PC-9 (cell line): ENCODE measurements at regions of chr11 and their contacts with region 1.

Region 1: DNA sequence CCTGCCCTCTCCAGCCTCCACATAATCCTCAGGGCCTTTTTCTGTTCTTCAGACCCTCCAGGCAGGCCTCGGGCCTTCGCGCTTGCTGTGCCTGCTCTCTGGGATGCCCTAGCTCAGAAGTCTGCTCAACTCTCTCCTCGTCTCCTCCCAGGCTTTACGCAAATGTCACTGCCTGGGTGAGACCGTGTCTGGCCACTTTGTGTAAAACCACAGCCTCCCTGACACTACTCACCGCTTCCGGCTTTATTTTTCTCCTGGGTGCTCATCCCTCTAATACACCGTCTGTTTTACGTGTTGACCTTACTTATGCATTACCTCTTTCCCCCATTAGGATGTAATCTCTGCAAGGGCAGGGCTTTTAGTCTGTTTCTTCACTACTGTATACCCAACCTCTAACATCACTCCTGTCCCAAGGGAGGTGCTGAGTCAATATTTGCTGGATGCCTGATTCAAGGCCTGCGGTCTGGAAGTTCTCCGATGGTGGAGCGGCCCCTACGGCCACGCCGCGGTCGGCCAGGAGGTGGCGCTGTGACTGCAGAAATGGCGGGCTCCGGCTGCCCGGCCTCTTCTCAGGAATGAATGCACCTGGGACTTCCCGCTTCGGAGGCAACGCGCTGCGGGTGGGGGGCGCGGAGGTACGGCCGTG is 58.2 kb upstream of the THY1 start:
- DNase-seq: peak; percentile 86 to 90
- H3K4me3 ChIP-seq: no peak overlapping the region
- H3K27ac ChIP-seq: no peak overlapping the region
- H3K4me1 ChIP-seq: peaks cover 6% of the 10 kb centered on the region
- H3K27me3 ChIP-seq: 0 out of 2 replicates have a peak, but pooled peaks cover 7% of the 10 kb centered on the region
- CTCF ChIP-seq: peak; percentile 100

Region 2: GRCh38 chr11:119533921-119534736 is 53.0 kb after region 1 on chr11:
- CTCF ChIA-PET with region 1: no interaction called
- POLR2A ChIA-PET with region 1: no interaction called
- intact Hi-C with region 1: loop called (anchors 5 kb)
- DNase-seq: peak; percentile 49 to 74
- H3K4me3 ChIP-seq: no peak overlapping the region
- H3K27ac ChIP-seq: no peak overlapping the region
- H3K4me1 ChIP-seq: no peaks in the 10 kb centered on the region
- H3K27me3 ChIP-seq: peaks cover 34% of the 10 kb centered on the region
- CTCF ChIP-seq: peak; percentile 99

Region 3: GRCh38 chr11:119666463-119667131 is 185.5 kb after region 1 on chr11:
- CTCF ChIA-PET with region 1: no interaction called
- POLR2A ChIA-PET with region 1: no interaction called
- intact Hi-C with region 1: loop called (anchors 2 kb)
- DNase-seq: peak; percentile 71 to 83
- H3K4me3 ChIP-seq: no peak overlapping the region
- H3K27ac ChIP-seq: no peak overlapping the region
- H3K4me1 ChIP-seq: no peaks in the 10 kb centered on the region
- H3K27me3 ChIP-seq: no peaks in the 10 kb centered on the region
- CTCF ChIP-seq: peak; percentile 98

Region 4: DNA sequence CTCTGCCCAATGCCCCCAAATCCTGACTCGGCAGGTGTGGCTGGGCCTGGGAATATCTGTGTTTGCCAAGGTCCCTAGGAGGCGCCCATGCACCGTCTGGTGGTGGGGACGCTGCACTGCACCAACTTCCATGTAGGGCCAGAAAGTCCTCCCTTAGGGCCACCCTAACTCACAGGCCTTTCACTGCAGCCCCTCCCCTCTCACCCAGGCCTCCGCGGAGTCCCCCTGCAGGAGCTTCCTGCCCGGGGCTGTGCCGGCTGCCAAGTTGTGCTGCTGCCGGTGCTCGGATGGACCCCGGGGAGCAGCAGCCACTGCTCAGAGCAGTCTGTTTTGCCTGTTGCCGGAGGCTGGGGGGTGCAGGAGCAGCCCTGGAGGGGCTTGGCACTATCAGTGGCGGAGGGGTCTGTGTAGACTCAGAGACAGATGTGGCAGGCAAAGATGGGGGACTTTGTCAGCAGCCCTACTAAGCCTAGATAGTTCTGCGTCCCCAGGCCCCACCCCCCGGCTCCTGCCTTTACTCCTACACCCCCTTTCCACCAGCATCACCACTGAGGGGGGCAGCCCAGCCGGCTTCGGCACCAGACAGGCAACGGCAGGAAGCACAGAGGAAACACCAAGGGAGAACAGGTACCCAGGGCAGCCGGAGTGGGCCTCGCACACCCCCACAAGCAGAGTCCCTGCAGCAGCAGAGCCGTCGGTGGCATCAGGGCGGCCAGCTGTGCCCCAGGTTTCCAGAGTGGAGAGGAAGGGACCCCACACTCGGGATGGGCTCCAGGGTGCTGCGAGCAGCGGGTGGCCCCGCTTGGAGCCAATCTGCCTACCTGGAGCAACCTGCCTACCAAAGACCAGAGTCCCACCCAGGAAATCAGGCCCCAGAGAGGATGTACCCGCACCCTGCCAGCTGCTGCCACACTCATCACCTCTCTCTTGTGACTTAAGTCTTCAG is 532.5 kb after region 1 on chr11:
- CTCF ChIA-PET with region 1: no interaction called
- POLR2A ChIA-PET with region 1: no interaction called
- intact Hi-C with region 1: loop called (anchors 10 kb)
- DNase-seq: peak; percentile 21 to 43
- H3K4me3 ChIP-seq: no peak overlapping the region
- H3K27ac ChIP-seq: no peak overlapping the region
- H3K4me1 ChIP-seq: no peaks in the 10 kb centered on the region
- H3K27me3 ChIP-seq: peaks cover 99% of the 10 kb centered on the region
- CTCF ChIP-seq: peak; percentile 82

Region 5: GRCh38 chr11:120229451-120230424 is 748.6 kb after region 1 on chr11:
- CTCF ChIA-PET with region 1: no interaction called
- POLR2A ChIA-PET with region 1: no interaction called
- intact Hi-C with region 1: loop called (anchors 5 kb)
- DNase-seq: no peak
- H3K4me3 ChIP-seq: no peak overlapping the region
- H3K27ac ChIP-seq: no peak overlapping the region
- H3K4me1 ChIP-seq: no peaks in the 10 kb centered on the region
- H3K27me3 ChIP-seq: no peaks in the 10 kb centered on the region
- CTCF ChIP-seq: peak; percentile 89